Heart left ventricle (tissue), 16 donors: ENCODE measurements at regions of chr12 and their contacts with region 1.

Region 1: GRCh38 chr12:119249326-119250155 is 70.8 kb downstream of the HSPB8 start:
- DNase-seq: no peak
- ATAC-seq: no peak
- H3K4me3 ChIP-seq: no peak overlapping the region
- H3K27ac ChIP-seq: peak overlapping the region in 8 of 12 donors; percentile 16 to 62 (median 40)
- H3K4me1 ChIP-seq: peaks cover 0 to 31% (median 13%) of the 10 kb centered on the region in 12 donors
- H3K27me3 ChIP-seq: no peaks in the 10 kb centered on the region
- CTCF ChIP-seq: no peak
- POLR2A ChIP-seq: no peak

Region 2: GRCh38 chr12:119216084-119216483 is 33.5 kb before region 1 on chr12:
- intact Hi-C with region 1: no loop called
- DNase-seq: no peak
- ATAC-seq: no peak
- H3K4me3 ChIP-seq: no peak overlapping the region
- H3K27ac ChIP-seq: no peak overlapping the region
- H3K4me1 ChIP-seq: no peaks in the 10 kb centered on the region
- H3K27me3 ChIP-seq: no peaks in the 10 kb centered on the region
- CTCF ChIP-seq: no peak
- POLR2A ChIP-seq: no peak

Region 3: DNA sequence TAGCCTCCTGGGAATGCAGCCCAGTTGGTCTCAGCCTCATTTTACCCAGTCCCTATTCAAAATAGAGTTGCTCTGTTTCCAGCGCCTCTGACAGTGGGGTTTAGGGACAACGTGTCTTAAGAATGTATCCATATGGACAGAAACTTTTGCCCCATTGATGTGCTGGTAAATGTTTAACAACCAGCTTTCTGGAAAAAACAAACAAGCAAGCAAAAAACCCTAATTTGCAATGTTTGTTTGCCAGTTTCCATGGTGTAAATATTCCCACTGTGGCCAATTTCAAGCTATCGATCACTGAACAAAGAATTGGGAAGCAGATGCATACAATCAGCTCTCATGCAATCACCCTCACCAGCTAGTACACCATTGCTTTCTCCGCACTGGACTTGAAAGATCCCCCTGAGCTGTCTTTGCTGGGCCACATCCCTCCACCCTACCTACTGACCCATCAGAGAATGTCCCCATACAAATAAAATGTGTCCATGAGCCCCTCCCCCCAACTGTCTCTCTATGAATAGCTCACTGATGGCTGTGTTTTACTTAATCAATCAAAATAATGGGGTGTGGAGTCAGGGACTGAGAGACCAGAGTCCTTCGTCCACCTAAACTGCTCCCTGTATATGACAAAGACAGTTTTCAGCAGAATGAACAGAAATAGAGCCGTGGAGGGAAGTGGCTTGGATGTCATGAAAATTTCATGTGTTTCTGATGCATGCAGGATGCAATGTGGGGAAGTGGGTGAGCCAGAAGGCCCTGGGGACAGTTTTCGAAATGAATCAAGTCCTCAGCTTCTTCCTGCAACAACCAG is 125.7 kb after region 1 on chr12:
- intact Hi-C with region 1: loop called in 1 of 10 experiments (anchors 5 kb)
- DNase-seq: peak in 1 of 5 donors; percentile 26
- ATAC-seq: peak in 1 of 4 donors; percentile 2
- H3K4me3 ChIP-seq: no peak overlapping the region
- H3K27ac ChIP-seq: peak overlapping the region in 10 of 12 donors; percentile 2 to 81 (median 48)
- H3K4me1 ChIP-seq: peaks cover 0 to 50% (median 18%) of the 10 kb centered on the region in 12 donors
- H3K27me3 ChIP-seq: no peaks in the 10 kb centered on the region
- CTCF ChIP-seq: no peak
- POLR2A ChIP-seq: no peak